ENCODE measurements at regions of chr22 and their contacts with region 1.

Region 1: DNA sequence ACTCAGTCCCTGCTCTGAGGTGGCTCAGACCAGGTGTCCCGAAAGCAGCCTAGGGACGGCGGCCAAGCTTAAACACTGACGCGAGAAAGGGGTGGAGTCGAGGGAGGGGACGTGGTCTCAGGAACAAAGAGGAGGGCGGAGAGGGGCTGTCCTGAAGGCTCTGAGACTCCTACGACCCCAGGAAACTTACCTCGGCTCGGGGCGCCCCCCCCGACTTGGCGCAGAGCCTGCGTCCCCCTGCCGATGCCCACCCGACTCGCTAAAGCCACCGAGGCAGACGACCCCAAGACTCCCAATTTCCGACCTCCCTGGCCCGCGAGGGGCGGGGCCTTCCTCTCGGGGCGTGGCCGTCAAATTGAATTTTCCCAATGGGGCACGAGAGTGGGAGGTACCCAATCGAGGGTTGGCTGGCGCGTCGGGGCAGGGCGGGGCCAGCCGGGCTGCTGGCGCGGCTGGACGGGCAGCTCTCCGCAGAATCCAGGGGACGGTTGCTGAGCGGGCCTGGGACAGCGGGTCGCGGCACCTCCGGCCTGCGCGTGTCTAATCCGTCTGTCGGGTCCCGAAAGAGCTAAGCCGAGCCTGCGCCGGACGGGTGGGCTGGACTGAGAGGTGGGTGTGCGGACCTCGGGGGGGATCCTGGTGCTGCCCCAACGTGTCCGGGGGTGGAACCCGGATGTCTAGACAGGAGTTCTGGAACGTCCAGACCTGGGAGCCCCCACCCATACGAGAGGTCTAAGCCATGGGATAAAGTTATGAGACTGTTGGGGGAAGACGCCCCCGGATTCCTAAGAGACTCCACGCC is at the start of gene SMTN:
- DNase-seq: peak; percentile 97
- H3K4me3 ChIP-seq: peak within 1 kb of the TSS; percentile 86 to 89
- H3K27ac ChIP-seq: peak within 1 kb of the TSS; percentile 71 to 94
- H3K4me1 ChIP-seq: peaks cover 21 to 40% of the 10 kb centered on the region in 2 experiments; a peak in 2 of 4 replicates
- H3K27me3 ChIP-seq: no peaks in the 10 kb centered on the region
- CTCF ChIP-seq: peak; percentile 10; the same call in 1 of the 2 replicates
- EP300 ChIP-seq: no peak
- RAD21 ChIP-seq: no peak
- polyA plus RNA-seq, gene SMTN: 12.5 and 30.4 TPM in 2 replicates

Region 2: GRCh38 chr22:30763815-30764686 is 317.0 kb before region 1 on chr22:
- CTCF ChIA-PET with region 1: interaction called, 17 read pairs
- POLR2A ChIA-PET with region 1: no interaction called
- DNase-seq: peak; percentile 72
- H3K4me3 ChIP-seq: no peak overlapping the region; a peak in 1 of 4 replicates
- H3K27ac ChIP-seq: no peak overlapping the region
- H3K4me1 ChIP-seq: no peaks in the 10 kb centered on the region
- H3K27me3 ChIP-seq: no peaks in the 10 kb centered on the region
- CTCF ChIP-seq: peak; percentile 84
- EP300 ChIP-seq: no peak
- RAD21 ChIP-seq: peak; percentile 95

Region 3: GRCh38 chr22:30940685-30941362 is 140.2 kb before region 1 on chr22:
- CTCF ChIA-PET with region 1: interaction called, 72 read pairs
- POLR2A ChIA-PET with region 1: interaction called, 7 read pairs
- DNase-seq: no peak
- H3K4me3 ChIP-seq: no peak overlapping the region
- H3K27ac ChIP-seq: no peak overlapping the region
- H3K4me1 ChIP-seq: no peaks in the 10 kb centered on the region; a peak in 1 of 4 replicates
- H3K27me3 ChIP-seq: no peaks in the 10 kb centered on the region
- CTCF ChIP-seq: no peak
- EP300 ChIP-seq: no peak
- RAD21 ChIP-seq: no peak

Region 4: GRCh38 chr22:30968924-30969539 is 112.0 kb before region 1 on chr22 and contains the start of gene TUG1:
- CTCF ChIA-PET with region 1: interaction called, 14 read pairs
- POLR2A ChIA-PET with region 1: interaction called, 18 read pairs
- DNase-seq: peak; percentile 99
- H3K4me3 ChIP-seq: peak within 1 kb of the TSS; percentile 74 to 84
- H3K27ac ChIP-seq: peak within 1 kb of the TSS; percentile 82 to 94
- H3K4me1 ChIP-seq: peaks cover 0 to 8% of the 10 kb centered on the region in 2 experiments; a peak in 2 of 4 replicates
- H3K27me3 ChIP-seq: no peaks in the 10 kb centered on the region
- CTCF ChIP-seq: no peak
- EP300 ChIP-seq: no peak; a peak in 1 of 4 replicates
- RAD21 ChIP-seq: no peak
- polyA plus RNA-seq, gene TUG1: 46.8 and 63.2 TPM in 2 replicates

Region 5: DNA sequence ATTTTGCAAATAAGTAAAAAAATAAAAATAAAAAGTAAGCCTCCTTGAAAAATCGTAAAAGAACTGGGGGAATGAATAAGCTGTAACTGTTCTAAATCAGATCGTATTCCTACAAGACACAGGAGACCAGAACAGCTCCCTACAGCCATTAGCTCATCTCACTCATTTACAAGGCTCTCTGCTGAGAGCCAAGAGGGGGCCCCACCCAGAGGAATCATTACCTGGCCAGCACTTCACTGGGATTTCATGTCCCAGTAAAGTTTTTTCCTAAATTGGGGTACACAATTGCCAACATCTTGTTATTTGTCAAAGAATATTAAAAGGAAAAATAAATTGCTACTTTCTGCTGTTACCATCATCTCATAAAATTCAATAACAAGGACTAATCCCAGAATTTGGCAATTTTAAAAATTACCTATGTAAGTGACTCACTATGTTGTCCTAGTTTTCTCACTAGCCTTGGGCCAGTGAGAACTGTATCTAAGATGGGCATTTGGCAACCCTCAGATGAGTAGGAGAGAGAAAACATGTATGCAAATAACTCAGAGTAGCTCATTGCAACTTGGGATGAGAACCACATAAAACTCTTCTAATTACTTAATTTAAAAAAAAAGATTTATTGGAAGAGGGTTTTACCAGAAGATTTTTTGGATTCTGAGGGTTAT is 18.4 kb before region 1 on chr22:
- CTCF ChIA-PET with region 1: interaction called, 20 read pairs
- POLR2A ChIA-PET with region 1: interaction called, 3 read pairs
- DNase-seq: no peak
- H3K4me3 ChIP-seq: no peak overlapping the region
- H3K27ac ChIP-seq: no peak overlapping the region
- H3K4me1 ChIP-seq: no peaks in the 10 kb centered on the region; a peak in 1 of 4 replicates
- H3K27me3 ChIP-seq: no peaks in the 10 kb centered on the region
- CTCF ChIP-seq: no peak
- EP300 ChIP-seq: no peak
- RAD21 ChIP-seq: no peak

Region 6: DNA sequence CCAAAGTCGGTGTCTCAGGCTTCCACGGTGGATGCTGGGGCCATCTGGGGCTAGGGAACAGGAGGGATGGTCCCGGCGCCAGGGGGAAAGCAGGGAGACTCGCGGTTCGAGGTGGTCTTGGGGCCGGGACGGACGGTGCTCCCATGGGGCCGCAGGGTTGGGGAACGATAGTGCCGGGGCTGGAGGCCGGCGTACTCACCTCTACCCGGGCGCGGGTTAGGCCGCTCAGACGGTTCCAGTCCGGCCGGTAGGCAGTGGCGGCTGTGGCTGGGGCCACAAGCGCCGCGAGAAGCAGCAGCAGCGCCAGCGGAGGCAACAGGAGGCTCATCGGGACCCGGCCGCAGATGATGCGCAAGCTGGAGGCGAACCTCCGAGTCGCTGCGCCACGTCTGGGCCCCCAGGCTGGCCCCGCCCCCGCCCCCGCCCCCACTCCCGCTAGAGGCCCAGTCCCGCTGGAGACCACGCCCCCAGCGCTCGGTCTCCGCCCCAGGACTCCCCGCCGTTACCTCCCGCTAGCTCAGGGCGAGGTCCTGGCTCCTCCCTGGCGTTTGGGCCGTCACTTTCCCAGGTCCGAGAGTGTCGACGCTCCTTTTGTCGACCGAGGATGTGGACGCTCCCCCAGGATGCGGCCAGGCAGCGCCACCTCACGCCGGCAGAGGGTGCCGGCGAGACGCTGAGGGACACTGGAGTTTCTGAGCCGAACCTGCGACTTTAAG is 26.3 kb after region 1 on chr22 and contains the start of gene SELENOM:
- CTCF ChIA-PET with region 1: interaction called, 85 read pairs
- POLR2A ChIA-PET with region 1: interaction called, 6 read pairs
- DNase-seq: peak; percentile 98
- H3K4me3 ChIP-seq: peak within 1 kb of the TSS; percentile 86 to 94
- H3K27ac ChIP-seq: peak within 1 kb of the TSS; percentile 67 to 85
- H3K4me1 ChIP-seq: peaks cover 0 to 13% of the 10 kb centered on the region in 2 experiments; a peak in 1 of 4 replicates
- H3K27me3 ChIP-seq: no peaks in the 10 kb centered on the region
- CTCF ChIP-seq: peak; percentile 98
- EP300 ChIP-seq: no peak
- RAD21 ChIP-seq: peak; percentile 92
- polyA plus RNA-seq, gene SELENOM: 97.1 and 117 TPM in 2 replicates

Region 7: DNA sequence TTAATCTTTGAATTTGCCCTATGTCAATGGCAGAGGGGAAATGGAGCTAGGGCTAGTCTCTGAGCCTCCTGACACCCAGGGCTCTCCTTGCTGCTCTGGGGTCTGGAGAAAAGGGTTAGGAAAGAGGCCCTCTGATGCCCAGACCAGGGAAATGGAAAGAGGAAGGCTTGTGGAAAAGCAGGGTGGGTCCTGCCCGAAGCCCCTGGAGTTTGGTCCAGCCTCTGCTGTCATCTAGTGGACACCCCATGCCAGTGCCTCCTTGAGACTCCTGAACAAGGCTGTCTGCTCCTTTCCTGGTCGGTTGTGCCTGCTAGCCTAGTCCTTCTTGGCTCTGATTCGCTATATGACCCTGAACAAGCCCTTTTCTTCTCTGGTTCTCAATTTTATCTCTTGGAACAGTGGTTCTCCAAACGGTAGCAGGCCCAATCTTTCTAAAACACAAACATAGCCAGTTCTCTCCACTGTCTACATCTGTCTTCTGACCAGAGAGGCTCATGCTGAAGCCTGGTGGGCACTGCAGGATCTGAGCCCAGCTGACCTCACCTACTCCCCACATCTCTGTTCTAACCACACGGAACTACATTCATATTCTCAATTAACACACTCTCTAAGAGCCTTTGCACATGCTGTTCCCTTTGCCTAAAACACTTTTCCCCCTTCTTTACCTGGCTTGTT is 68.0 kb after region 1 on chr22:
- CTCF ChIA-PET with region 1: interaction called, 53 read pairs
- POLR2A ChIA-PET with region 1: interaction called, 3 read pairs
- DNase-seq: peak; percentile 88
- H3K4me3 ChIP-seq: no peak overlapping the region; a peak in 1 of 4 replicates
- H3K27ac ChIP-seq: no peak overlapping the region
- H3K4me1 ChIP-seq: no peaks in the 10 kb centered on the region
- H3K27me3 ChIP-seq: no peaks in the 10 kb centered on the region
- CTCF ChIP-seq: peak; percentile 89
- EP300 ChIP-seq: no peak
- RAD21 ChIP-seq: peak; percentile 99

Region 8: GRCh38 chr22:31248138-31248745 is 167.2 kb after region 1 on chr22:
- CTCF ChIA-PET with region 1: no interaction called
- POLR2A ChIA-PET with region 1: no interaction called
- DNase-seq: peak; percentile 85
- H3K4me3 ChIP-seq: peak overlapping the region; percentile 73 to 80
- H3K27ac ChIP-seq: peak overlapping the region; percentile 61 to 88
- H3K4me1 ChIP-seq: peaks cover 15 to 63% of the 10 kb centered on the region in 2 experiments
- H3K27me3 ChIP-seq: no peaks in the 10 kb centered on the region
- CTCF ChIP-seq: no peak
- EP300 ChIP-seq: no peak
- RAD21 ChIP-seq: no peak

Measured in SK-N-SH (cell line).